ENCODE measurements at regions of chr7 and their contacts with region 1.

Region 1: GRCh38 chr7:37234928-37235327 is 213.7 kb downstream of the ELMO1 start:
- DNase-seq: peak in 3 of 9 experiments; percentile 16 to 56 (median 45)
- ATAC-seq: no peak
- H3K4me3 ChIP-seq: no peak overlapping the region
- H3K4me3 Mint-ChIP-seq: no peak overlapping the region
- H3K27ac ChIP-seq: no peak overlapping the region
- H3K27ac Mint-ChIP-seq: no peak overlapping the region
- H3K4me1 ChIP-seq: no peaks in the 10 kb centered on the region
- H3K4me1 Mint-ChIP-seq: peaks cover 8% of the 10 kb centered on the region
- H3K27me3 ChIP-seq: no peaks in the 10 kb centered on the region
- H3K27me3 Mint-ChIP-seq: no peaks in the 10 kb centered on the region
- CTCF ChIP-seq: peak; percentile 46

Region 2: DNA sequence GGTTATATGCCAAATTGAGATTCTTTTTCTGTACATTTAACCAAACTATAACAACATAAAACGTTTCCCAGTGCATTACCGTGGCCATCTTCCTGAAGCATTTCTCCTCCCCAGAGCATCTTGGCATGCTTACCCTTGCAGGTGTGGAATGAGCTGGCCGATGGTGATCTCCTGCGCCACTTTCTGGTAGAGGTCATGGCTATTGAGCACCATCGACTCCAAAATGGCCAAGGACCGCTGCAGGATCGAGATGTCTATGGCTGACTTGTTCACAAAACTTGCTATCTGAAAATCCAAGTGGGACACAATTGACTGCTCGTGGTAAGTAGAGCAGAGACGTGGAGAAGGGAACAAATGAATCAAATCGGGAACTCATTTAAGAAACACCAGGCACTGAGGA is 10.2 kb before region 1 on chr7:
- CTCF ChIA-PET with region 1: interaction called, 10 read pairs
- POLR2A ChIA-PET with region 1: interaction called, 4 read pairs
- intact Hi-C with region 1: no loop called
- DNase-seq: no peak
- ATAC-seq: no peak
- H3K4me3 ChIP-seq: no peak overlapping the region
- H3K4me3 Mint-ChIP-seq: no peak overlapping the region
- H3K27ac ChIP-seq: no peak overlapping the region
- H3K27ac Mint-ChIP-seq: no peak overlapping the region
- H3K4me1 ChIP-seq: no peaks in the 10 kb centered on the region
- H3K4me1 Mint-ChIP-seq: peaks cover 5% of the 10 kb centered on the region
- H3K27me3 ChIP-seq: no peaks in the 10 kb centered on the region
- H3K27me3 Mint-ChIP-seq: no peaks in the 10 kb centered on the region
- CTCF ChIP-seq: no peak

Region 3: GRCh38 chr7:37342688-37343471 is 108.0 kb after region 1 on chr7:
- CTCF ChIA-PET with region 1: interaction called, 12 read pairs
- POLR2A ChIA-PET with region 1: no interaction called
- intact Hi-C with region 1: loop called in 1 of 2 experiments (anchors 2 kb)
- DNase-seq: peak; percentile 48 to 87 (median 73)
- ATAC-seq: peak; percentile 91
- H3K4me3 ChIP-seq: peak overlapping the region; percentile 53 to 64
- H3K4me3 Mint-ChIP-seq: peak overlapping the region; percentile 93
- H3K27ac ChIP-seq: peak overlapping the region; percentile 69 to 72
- H3K27ac Mint-ChIP-seq: peak overlapping the region; percentile 97
- H3K4me1 ChIP-seq: peaks cover 39% of the 10 kb centered on the region
- H3K4me1 Mint-ChIP-seq: peaks cover 69% of the 10 kb centered on the region
- H3K27me3 ChIP-seq: no peaks in the 10 kb centered on the region
- H3K27me3 Mint-ChIP-seq: no peaks in the 10 kb centered on the region
- CTCF ChIP-seq: peak; percentile 43

Region 4: DNA sequence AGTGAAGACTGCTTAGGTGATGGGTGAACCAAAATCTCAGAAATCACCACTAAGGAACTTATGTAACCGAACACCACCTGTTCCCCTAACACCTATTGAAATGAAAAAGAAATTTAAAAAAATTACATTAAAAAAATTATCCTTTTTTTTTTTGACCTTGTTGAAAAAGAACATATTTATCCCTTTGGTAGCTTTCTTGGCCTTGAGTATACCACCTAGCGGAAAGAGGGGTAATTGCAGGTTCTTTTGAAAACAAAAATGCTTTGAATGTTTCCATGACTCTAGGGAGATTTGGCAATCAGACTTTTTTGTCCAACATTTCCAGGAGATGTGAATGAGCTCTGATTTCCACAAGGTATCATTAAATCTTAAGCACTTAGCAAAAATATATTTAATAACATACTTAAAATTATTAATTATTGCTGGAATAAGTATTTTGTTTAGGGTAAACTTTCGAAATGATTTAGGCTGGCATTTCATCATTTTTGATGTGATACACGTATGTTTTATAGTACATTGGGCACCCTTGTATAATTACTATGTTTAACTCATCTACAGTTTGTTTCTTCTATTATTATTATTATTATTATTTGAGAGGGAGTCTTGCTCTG is 260.8 kb after region 1 on chr7:
- CTCF ChIA-PET with region 1: interaction called, 30 read pairs
- POLR2A ChIA-PET with region 1: no interaction called
- intact Hi-C with region 1: loop called (anchors 1 to 5 kb)
- DNase-seq: peak in 2 of 9 experiments; percentile 42 to 53
- ATAC-seq: peak; percentile 56
- H3K4me3 ChIP-seq: no peak overlapping the region
- H3K4me3 Mint-ChIP-seq: no peak overlapping the region
- H3K27ac ChIP-seq: no peak overlapping the region
- H3K27ac Mint-ChIP-seq: no peak overlapping the region
- H3K4me1 ChIP-seq: no peaks in the 10 kb centered on the region
- H3K4me1 Mint-ChIP-seq: no peaks in the 10 kb centered on the region
- H3K27me3 ChIP-seq: peaks cover 0 to 2% of the 10 kb centered on the region in 2 experiments
- H3K27me3 Mint-ChIP-seq: no peaks in the 10 kb centered on the region
- CTCF ChIP-seq: peak; percentile 93

Region 5: GRCh38 chr7:37510043-37510634 is 275.2 kb after region 1 on chr7:
- CTCF ChIA-PET with region 1: interaction called, 9 read pairs
- POLR2A ChIA-PET with region 1: no interaction called
- intact Hi-C with region 1: loop called (anchors 1 kb)
- DNase-seq: peak in 2 of 9 experiments; percentile 38 to 53
- ATAC-seq: peak; percentile 57
- H3K4me3 ChIP-seq: no peak overlapping the region
- H3K4me3 Mint-ChIP-seq: no peak overlapping the region
- H3K27ac ChIP-seq: no peak overlapping the region
- H3K27ac Mint-ChIP-seq: no peak overlapping the region
- H3K4me1 ChIP-seq: no peaks in the 10 kb centered on the region
- H3K4me1 Mint-ChIP-seq: no peaks in the 10 kb centered on the region
- H3K27me3 ChIP-seq: no peaks in the 10 kb centered on the region
- H3K27me3 Mint-ChIP-seq: peaks cover 13% of the 10 kb centered on the region
- CTCF ChIP-seq: peak; percentile 80

Region 6: GRCh38 chr7:37833107-37833817 is 598.3 kb after region 1 on chr7:
- CTCF ChIA-PET with region 1: interaction called, 4 read pairs
- POLR2A ChIA-PET with region 1: no interaction called
- intact Hi-C with region 1: loop called in 1 of 2 experiments (anchors 2 kb)
- DNase-seq: peak in 7 of 9 experiments; percentile 18 to 72 (median 41)
- ATAC-seq: peak; percentile 73
- H3K4me3 ChIP-seq: peak overlapping the region; percentile 39 to 46
- H3K4me3 Mint-ChIP-seq: peak overlapping the region; percentile 83
- H3K27ac ChIP-seq: no peak overlapping the region
- H3K27ac Mint-ChIP-seq: peak overlapping the region; percentile 38
- H3K4me1 ChIP-seq: no peaks in the 10 kb centered on the region
- H3K4me1 Mint-ChIP-seq: peaks cover 8% of the 10 kb centered on the region
- H3K27me3 ChIP-seq: no peaks in the 10 kb centered on the region
- H3K27me3 Mint-ChIP-seq: peaks cover 7% of the 10 kb centered on the region
- CTCF ChIP-seq: peak; percentile 72